Right cardiac atrium (tissue), 5 donors: ENCODE measurements at regions of chr3 and their contacts with region 1.

Region 1: GRCh38 chr3:124559881-124560574 is 170.2 kb upstream of the UMPS start:
- DNase-seq: peak; percentile 63 to 76 (median 65)
- ATAC-seq: peak; percentile 76 to 79
- H3K4me3 ChIP-seq: no peak overlapping the region
- H3K27ac ChIP-seq: no peak overlapping the region
- H3K4me1 ChIP-seq: peaks cover 10% of the 10 kb centered on the region
- H3K27me3 ChIP-seq: no peaks in the 10 kb centered on the region

Region 2: DNA sequence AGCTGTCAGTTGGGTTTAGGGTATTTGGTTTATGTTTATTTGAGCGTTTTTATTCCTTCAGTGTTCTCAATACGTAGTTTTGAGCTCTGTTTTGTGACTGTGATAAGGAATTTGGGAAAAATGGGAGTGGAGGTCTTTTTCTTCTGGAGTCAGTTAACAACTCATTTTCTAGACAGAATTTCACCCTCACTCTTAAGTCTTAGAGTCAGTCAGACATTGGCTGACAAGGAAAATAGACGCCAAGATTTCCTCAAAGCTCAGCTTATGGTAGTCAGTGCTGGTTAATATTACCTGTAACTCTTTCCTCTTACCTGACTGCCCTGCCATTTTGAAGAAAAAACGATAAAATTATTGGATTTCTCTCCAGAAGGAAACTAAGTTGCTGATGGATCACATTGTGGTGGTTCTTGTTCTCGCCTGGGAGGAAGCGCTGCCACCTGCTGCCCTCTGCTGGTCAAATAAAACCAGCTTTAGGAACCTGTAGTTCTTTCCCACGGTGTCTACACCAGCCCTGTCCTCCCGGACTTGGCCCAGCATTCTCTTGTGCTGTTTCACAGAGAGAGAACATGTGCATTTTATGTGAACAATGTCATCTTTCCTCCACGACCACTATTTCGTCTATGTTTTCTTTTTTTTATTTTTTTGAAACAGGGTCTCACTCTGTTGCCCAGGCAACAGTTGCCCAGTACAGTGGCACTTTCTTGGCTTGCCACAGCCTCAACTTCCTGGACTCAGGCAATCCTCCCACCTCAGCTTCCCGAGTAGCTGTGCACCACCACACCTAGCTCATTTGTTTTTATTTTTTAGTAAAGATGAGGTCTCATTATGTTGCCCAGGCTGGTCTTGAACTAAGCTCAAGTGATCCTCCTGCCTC is 128.8 kb after region 1 on chr3:
- intact Hi-C with region 1: loop called (anchors 1 to 5 kb)
- DNase-seq: peak; percentile 74 to 84 (median 82)
- ATAC-seq: peak; percentile 86 to 87
- H3K4me3 ChIP-seq: no peak overlapping the region
- H3K27ac ChIP-seq: no peak overlapping the region
- H3K4me1 ChIP-seq: peaks cover 3% of the 10 kb centered on the region
- H3K27me3 ChIP-seq: no peaks in the 10 kb centered on the region